HAP-1 (cell line): ENCODE measurements at regions of chr7 and their contacts with region 1.

Region 1: DNA sequence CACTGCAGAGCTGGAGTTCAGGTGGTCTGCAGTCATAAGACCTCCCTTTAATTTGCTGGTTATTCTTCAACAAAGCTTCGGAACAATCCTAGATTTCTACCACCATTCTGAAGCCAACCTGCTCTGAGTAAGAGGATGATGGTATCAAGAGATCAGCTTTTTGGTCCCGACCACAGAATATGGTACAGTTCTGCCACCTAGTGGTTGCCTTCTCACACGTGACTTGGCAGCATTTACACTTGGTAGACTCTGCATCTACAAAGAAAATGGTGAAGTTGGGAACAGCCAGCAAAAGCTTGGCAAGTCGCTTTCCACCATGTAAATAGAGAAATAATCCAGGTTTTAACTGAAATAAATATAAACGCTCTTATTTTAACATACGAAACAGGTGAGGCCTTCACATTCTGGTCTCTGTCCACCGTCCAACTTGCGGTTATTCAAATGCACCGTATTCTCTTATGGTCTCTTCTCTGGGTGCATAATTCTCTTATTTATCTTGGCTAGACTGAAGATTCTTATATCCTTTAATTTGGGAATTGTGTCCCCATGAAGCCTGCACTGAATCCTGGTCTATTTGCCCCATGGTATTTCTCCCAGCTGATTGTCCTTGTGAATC is 173.9 kb upstream of the GRM3 start:
- DNase-seq: peak; percentile 83
- H3K4me3 ChIP-seq: no peak overlapping the region
- H3K4me1 ChIP-seq: no peaks in the 10 kb centered on the region; the same call in 1 of the 2 replicates
- H3K27me3 ChIP-seq: no peaks in the 10 kb centered on the region

Region 2: DNA sequence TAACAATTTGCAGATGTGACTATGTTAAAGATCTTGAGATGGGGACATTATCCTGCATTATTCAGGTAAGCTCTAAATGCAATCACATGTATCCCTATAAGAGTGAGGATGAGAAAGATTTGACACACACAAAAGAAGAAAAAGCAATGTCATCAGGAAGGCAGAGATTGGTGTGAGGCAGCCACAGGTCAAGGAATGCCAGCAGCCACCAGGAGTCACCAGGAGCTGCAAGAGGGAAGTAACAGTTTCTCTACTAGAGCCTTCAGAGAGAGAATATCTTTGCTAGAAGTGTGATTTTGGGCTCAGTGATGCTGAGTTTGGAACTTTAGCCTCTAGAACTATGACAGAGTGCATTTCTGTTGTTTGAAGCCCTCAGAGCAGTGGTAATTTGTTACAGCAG is 582.7 kb before region 1 on chr7:
- in situ Hi-C with region 1: loop called (anchors 5 kb)
- DNase-seq: no peak
- H3K4me3 ChIP-seq: no peak overlapping the region
- H3K4me1 ChIP-seq: no peaks in the 10 kb centered on the region
- H3K27me3 ChIP-seq: no peaks in the 10 kb centered on the region

Region 3: DNA sequence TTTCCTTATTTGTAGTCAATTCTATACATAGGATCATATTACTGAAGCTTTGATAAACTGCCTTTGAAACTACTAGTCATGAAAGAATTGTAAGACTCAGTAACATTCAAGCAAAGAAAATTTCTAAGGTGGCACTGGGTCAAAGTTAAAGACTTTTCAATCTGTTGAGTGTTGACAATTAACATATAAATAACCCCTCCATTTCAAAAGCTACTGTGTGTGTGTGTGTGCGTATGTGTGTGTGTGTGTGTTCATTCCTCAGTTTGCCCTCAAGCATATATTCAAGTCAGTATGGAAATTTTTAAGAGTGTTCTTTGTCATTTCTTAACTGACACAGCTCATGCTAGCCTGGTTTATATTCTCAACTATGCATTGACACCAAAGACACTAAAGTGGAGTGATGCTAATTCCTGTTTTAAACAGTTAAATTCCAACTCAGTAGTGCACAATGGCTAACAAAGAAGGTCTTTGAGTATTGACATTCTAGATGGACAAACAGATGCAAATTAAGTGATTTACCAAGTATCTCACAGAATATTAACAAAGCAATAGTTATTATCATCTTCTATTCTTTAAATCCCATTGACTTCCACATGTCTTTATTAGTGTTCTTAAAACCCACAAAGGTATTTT is 140.9 kb before region 1 on chr7:
- in situ Hi-C with region 1: no loop called
- DNase-seq: peak; percentile 61 to 99
- H3K4me3 ChIP-seq: no peak overlapping the region
- H3K4me1 ChIP-seq: peaks cover 20% of the 10 kb centered on the region
- H3K27me3 ChIP-seq: no peaks in the 10 kb centered on the region